ENCODE measurements at regions of chr11 and their contacts with region 1.

Region 1: GRCh38 chr11:130124096-130124495 is 35.5 kb upstream of the ST14 start:
- DNase-seq: no peak
- H3K4me3 ChIP-seq: no peak overlapping the region
- H3K27ac ChIP-seq: peak overlapping the region; percentile 55 to 70 (median 58)
- H3K4me1 ChIP-seq: peaks cover 25 to 57% (median 39%) of the 10 kb centered on the region in 4 donors
- H3K27me3 ChIP-seq: no peaks in the 10 kb centered on the region
- CTCF ChIP-seq: no peak
- EP300 ChIP-seq: no peak
- POLR2A ChIP-seq: no peak

Region 2: GRCh38 chr11:129930296-129930695 is 193.8 kb before region 1 on chr11:
- intact Hi-C with region 1: loop called (anchors 2 kb)
- DNase-seq: no peak
- H3K4me3 ChIP-seq: no peak overlapping the region
- H3K27ac ChIP-seq: no peak overlapping the region
- H3K4me1 ChIP-seq: peaks cover 0 to 5% (median 0%) of the 10 kb centered on the region in 4 donors
- H3K27me3 ChIP-seq: no peaks in the 10 kb centered on the region
- CTCF ChIP-seq: no peak
- EP300 ChIP-seq: no peak
- POLR2A ChIP-seq: no peak

Region 3: GRCh38 chr11:130002846-130003716 is 121.0 kb before region 1 on chr11:
- intact Hi-C with region 1: loop called (anchors 5 kb)
- DNase-seq: peak; percentile 99
- H3K4me3 ChIP-seq: peak overlapping the region; percentile 81 to 94 (median 89)
- H3K27ac ChIP-seq: peak overlapping the region; percentile 97 to 100 (median 98)
- H3K4me1 ChIP-seq: peaks cover 17 to 30% (median 26%) of the 10 kb centered on the region in 4 donors
- H3K27me3 ChIP-seq: no peaks in the 10 kb centered on the region
- CTCF ChIP-seq: peak in 1 of 3 experiments; percentile 14
- EP300 ChIP-seq: no peak
- POLR2A ChIP-seq: peak; percentile 87